ENCODE measurements at regions of chr20 and their contacts with region 1.

Region 1: DNA sequence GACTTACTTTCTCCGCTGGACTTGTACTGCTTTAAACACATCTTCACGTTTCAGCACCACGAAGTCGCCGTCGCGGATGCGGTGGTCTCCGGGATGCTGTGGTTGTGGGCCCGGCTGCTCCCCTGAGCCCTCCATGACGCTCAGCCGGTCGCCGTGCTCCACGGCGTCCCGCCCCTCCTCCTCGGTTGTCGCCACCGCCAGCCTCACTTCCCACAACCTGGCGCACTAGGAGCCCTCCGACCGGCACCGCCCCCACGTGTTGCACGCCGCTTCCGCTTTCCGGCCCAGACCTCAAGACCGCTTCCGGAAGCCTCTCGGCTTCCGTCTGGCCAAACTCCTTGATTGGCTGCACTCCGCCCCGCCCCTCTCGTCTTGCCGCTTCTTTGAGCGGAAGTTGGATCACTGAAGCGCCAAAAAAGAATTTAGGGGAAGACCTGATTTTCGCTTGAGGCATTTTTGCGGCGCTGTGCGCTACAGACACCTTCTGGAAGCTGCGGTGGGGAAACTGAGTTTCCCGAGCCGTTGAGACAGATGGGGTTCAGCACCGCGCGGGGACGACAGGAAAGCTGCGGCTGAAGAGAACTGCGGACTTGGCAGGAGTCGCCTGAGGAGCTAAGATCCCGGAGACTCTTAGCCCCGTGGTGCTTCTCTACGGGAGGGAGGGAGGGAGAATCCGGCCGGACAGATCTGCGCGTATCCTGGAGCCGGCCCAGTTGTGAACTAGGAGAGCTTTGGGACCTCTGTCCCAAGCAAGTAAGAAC is at the starts of genes MCM8 and TRMT6:
- DNase-seq: peak; percentile 88 to 98 (median 95)
- ATAC-seq: peak; percentile 95
- H3K4me3 ChIP-seq: peak within 1 kb of the TSS; percentile 80 to 82
- H3K4me3 Mint-ChIP-seq: peak within 1 kb of the TSS; percentile 96
- H3K27ac ChIP-seq: peak within 1 kb of the TSS; percentile 62 to 73
- H3K27ac Mint-ChIP-seq: peak within 1 kb of the TSS; percentile 93
- H3K4me1 ChIP-seq: peaks cover 19% of the 10 kb centered on the region
- H3K4me1 Mint-ChIP-seq: peaks cover 48% of the 10 kb centered on the region
- H3K27me3 ChIP-seq: no peaks in the 10 kb centered on the region
- H3K27me3 Mint-ChIP-seq: no peaks in the 10 kb centered on the region
- CTCF ChIP-seq: no peak
- total RNA-seq, gene MCM8: 1.8 to 2.0 TPM
- total RNA-seq, gene TRMT6: 9.6 to 10.4 TPM

Region 2: GRCh38 chr20:5126512-5127203 is 823.8 kb before region 1 on chr20 and contains the start of gene CDS2:
- CTCF ChIA-PET with region 1: no interaction called
- POLR2A ChIA-PET with region 1: no interaction called
- intact Hi-C with region 1: loop called (anchors 5 to 10 kb)
- DNase-seq: peak; percentile 99 to 100 (median 100)
- ATAC-seq: peak; percentile 81
- H3K4me3 ChIP-seq: peak within 1 kb of the TSS; percentile 68 to 83
- H3K4me3 Mint-ChIP-seq: peak within 1 kb of the TSS; percentile 95
- H3K27ac ChIP-seq: peak within 1 kb of the TSS; percentile 98 to 99
- H3K27ac Mint-ChIP-seq: peak within 1 kb of the TSS; percentile 99
- H3K4me1 ChIP-seq: peaks cover 26% of the 10 kb centered on the region
- H3K4me1 Mint-ChIP-seq: peaks cover 33% of the 10 kb centered on the region
- H3K27me3 ChIP-seq: no peaks in the 10 kb centered on the region
- H3K27me3 Mint-ChIP-seq: no peaks in the 10 kb centered on the region
- CTCF ChIP-seq: peak; percentile 54
- total RNA-seq, gene CDS2: 68.7 to 70.9 TPM

Region 3: DNA sequence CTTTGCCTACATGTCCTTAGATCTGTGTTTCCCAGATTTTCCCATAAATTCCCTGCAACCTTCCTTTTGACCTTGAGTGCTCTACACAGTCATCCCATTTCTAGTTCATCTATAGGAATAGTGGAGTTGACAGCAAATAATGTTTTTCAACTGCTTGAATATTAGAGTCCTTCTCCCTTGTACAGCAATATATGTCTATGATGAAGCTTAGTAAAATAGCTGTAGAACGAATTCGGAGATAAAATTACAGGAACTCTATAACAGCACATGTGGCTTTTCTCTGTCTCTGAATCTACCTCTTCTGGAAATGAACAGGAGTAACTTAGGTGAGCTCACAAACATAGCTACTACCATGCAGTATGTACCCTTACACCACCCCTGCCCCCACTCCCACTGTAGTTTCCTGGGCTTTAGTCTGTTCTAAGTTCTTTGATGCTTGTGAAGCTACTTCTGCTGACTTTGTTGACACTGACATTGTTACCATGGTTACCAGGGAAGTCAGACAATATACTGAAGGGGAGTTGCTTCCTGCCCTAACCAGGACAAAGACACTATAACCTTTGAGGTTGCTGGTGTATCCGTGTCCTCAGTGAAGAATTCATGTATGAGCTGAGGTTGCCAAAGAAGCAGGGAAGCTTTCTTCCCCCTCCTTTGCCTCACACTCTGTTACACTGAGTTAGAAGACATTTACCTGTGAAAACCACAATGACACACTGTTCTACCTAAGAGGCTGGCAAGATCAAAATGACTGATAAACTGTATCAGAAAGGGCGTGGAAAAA is 236.0 kb before region 1 on chr20:
- CTCF ChIA-PET with region 1: no interaction called
- POLR2A ChIA-PET with region 1: no interaction called
- intact Hi-C with region 1: loop called in 1 of 2 experiments (anchors 1 kb)
- DNase-seq: peak; percentile 55 to 97 (median 81)
- ATAC-seq: peak; percentile 89
- H3K4me3 ChIP-seq: peak overlapping the region in 1 of 2 experiments; percentile 15
- H3K4me3 Mint-ChIP-seq: peak overlapping the region; percentile 73
- H3K27ac ChIP-seq: peak overlapping the region; percentile 67 to 83
- H3K27ac Mint-ChIP-seq: peak overlapping the region; percentile 95
- H3K4me1 ChIP-seq: peaks cover 18% of the 10 kb centered on the region
- H3K4me1 Mint-ChIP-seq: peaks cover 35% of the 10 kb centered on the region
- H3K27me3 ChIP-seq: no peaks in the 10 kb centered on the region
- H3K27me3 Mint-ChIP-seq: no peaks in the 10 kb centered on the region
- CTCF ChIP-seq: no peak

Region 4: GRCh38 chr20:5749952-5750779 is 200.3 kb before region 1 on chr20 and contains the start of gene SHLD1:
- CTCF ChIA-PET with region 1: no interaction called
- POLR2A ChIA-PET with region 1: no interaction called
- intact Hi-C with region 1: loop called (anchors 1 to 2 kb)
- DNase-seq: peak; percentile 55 to 92 (median 81)
- ATAC-seq: peak; percentile 98
- H3K4me3 ChIP-seq: peak within 1 kb of the TSS; percentile 69 to 86
- H3K4me3 Mint-ChIP-seq: peak within 1 kb of the TSS; percentile 96
- H3K27ac ChIP-seq: peak within 1 kb of the TSS; percentile 70 to 71
- H3K27ac Mint-ChIP-seq: peak within 1 kb of the TSS; percentile 96
- H3K4me1 ChIP-seq: peaks cover 24% of the 10 kb centered on the region
- H3K4me1 Mint-ChIP-seq: peaks cover 28% of the 10 kb centered on the region
- H3K27me3 ChIP-seq: no peaks in the 10 kb centered on the region
- H3K27me3 Mint-ChIP-seq: no peaks in the 10 kb centered on the region
- CTCF ChIP-seq: no peak
- total RNA-seq, gene SHLD1: 4.2 to 5.9 TPM

Region 5: DNA sequence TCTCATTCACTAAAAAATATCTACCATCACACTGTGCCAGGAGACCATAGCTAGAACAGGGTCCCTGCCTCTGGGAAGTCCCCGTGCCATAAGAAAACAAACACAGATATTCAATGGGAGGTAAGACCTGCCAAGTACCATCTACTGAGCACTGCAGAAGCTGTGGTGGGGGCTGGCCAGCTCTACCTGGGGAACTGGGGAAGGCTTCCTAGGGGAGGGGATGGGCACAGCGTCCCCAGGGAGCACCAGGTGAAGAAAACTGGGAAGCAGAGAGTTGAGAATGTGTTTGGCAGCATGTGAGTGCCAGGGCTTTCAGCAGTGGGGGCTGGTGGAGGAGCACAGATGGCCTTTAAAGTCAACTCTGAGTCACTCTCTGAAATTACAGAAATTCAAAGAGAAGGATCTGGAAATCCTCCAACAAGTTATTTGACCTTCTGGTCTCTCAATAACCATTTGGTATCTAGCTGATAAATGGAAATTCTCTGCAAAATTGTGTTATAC is 115.1 kb before region 1 on chr20:
- CTCF ChIA-PET with region 1: no interaction called
- POLR2A ChIA-PET with region 1: no interaction called
- intact Hi-C with region 1: loop called in 1 of 2 experiments (anchors 5 kb)
- DNase-seq: peak in 5 of 9 experiments; percentile 15 to 59 (median 41)
- ATAC-seq: peak; percentile 56
- H3K4me3 ChIP-seq: no peak overlapping the region
- H3K4me3 Mint-ChIP-seq: no peak overlapping the region
- H3K27ac ChIP-seq: peak overlapping the region; percentile 66 to 81
- H3K27ac Mint-ChIP-seq: peak overlapping the region; percentile 91
- H3K4me1 ChIP-seq: peaks cover 20% of the 10 kb centered on the region
- H3K4me1 Mint-ChIP-seq: peaks cover 23% of the 10 kb centered on the region
- H3K27me3 ChIP-seq: no peaks in the 10 kb centered on the region
- H3K27me3 Mint-ChIP-seq: no peaks in the 10 kb centered on the region
- CTCF ChIP-seq: no peak

Region 6: GRCh38 chr20:5996765-5997164 is 46.3 kb after region 1 on chr20:
- CTCF ChIA-PET with region 1: no interaction called
- POLR2A ChIA-PET with region 1: interaction called, 4 read pairs
- intact Hi-C with region 1: loop called in 1 of 2 experiments (anchors 2 kb)
- DNase-seq: peak; percentile 7 to 88 (median 49)
- ATAC-seq: peak; percentile 95
- H3K4me3 ChIP-seq: no peak overlapping the region
- H3K4me3 Mint-ChIP-seq: peak overlapping the region; percentile 8
- H3K27ac ChIP-seq: peak overlapping the region in 1 of 2 experiments; percentile 37
- H3K27ac Mint-ChIP-seq: peak overlapping the region; percentile 75
- H3K4me1 ChIP-seq: peaks cover 18% of the 10 kb centered on the region
- H3K4me1 Mint-ChIP-seq: peaks cover 35% of the 10 kb centered on the region
- H3K27me3 ChIP-seq: no peaks in the 10 kb centered on the region
- H3K27me3 Mint-ChIP-seq: no peaks in the 10 kb centered on the region
- CTCF ChIP-seq: no peak

Measured in CD8-positive, alpha-beta T cell (primary cell).